ENCODE measurements at regions of chr17 and their contacts with region 1.

Region 1: GRCh38 chr17:19648475-19649406 is at the start of gene ALDH3A2:
- DNase-seq: peak; percentile 98
- H3K4me3 ChIP-seq: peak within 1 kb of the TSS; percentile 81 to 90 (median 88)
- H3K27ac ChIP-seq: peak within 1 kb of the TSS; percentile 86 to 99 (median 97)
- H3K4me1 ChIP-seq: peaks cover 0 to 63% (median 56%) of the 10 kb centered on the region in 4 donors
- H3K27me3 ChIP-seq: no peaks in the 10 kb centered on the region
- CTCF ChIP-seq: peak in 1 of 4 experiments; percentile 17
- EP300 ChIP-seq: peak in 1 of 4 donors; percentile 8
- POLR2A ChIP-seq: peak; percentile 92 to 94
- total RNA-seq, gene ALDH3A2: 56.8 to 104 (median 78.2) TPM

Region 2: DNA sequence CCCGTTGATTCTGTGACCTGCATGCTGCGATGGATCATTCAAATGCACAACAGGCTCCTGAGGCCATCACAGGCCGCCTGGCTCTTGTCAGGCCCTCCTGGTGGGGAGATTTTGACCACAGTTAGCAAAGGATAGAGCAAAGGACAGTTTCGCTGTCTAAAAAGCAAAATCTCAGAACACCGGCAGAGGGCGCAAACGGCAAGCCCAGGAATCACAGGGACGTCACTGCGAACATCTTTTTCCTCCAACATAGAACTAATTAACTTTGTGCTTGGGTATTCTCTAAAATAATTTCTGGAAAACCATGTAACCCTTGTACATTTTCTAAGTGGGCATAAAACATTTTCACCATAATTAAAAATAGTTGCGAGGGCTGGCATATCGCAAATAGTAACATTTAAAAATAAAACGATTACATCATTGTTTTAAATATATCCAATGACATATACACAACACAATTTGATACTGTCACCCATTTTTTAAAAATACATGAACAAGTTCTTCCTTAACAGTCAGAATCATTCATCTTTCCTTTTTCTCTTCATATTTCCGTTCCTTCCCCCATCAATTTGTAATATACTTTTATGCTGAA is 134.7 kb before region 1 on chr17:
- intact Hi-C with region 1: loop called (anchors 2 kb)
- DNase-seq: peak; percentile 84
- H3K4me3 ChIP-seq: no peak overlapping the region
- H3K27ac ChIP-seq: peak overlapping the region in 3 of 4 donors; percentile 23 to 68 (median 35)
- H3K4me1 ChIP-seq: peaks cover 0 to 23% (median 8%) of the 10 kb centered on the region in 4 donors
- H3K27me3 ChIP-seq: no peaks in the 10 kb centered on the region
- CTCF ChIP-seq: peak; percentile 85 to 96 (median 95)
- EP300 ChIP-seq: no peak
- POLR2A ChIP-seq: no peak

Region 3: GRCh38 chr17:19579867-19580565 is 68.7 kb before region 1 on chr17:
- intact Hi-C with region 1: loop called (anchors 5 kb)
- DNase-seq: no peak
- H3K4me3 ChIP-seq: peak overlapping the region; percentile 11 to 60 (median 50)
- H3K27ac ChIP-seq: peak overlapping the region in 3 of 4 donors; percentile 32 to 61 (median 59)
- H3K4me1 ChIP-seq: peaks cover 0 to 17% (median 9%) of the 10 kb centered on the region in 4 donors
- H3K27me3 ChIP-seq: no peaks in the 10 kb centered on the region
- CTCF ChIP-seq: no peak
- EP300 ChIP-seq: no peak
- POLR2A ChIP-seq: no peak

Region 4: DNA sequence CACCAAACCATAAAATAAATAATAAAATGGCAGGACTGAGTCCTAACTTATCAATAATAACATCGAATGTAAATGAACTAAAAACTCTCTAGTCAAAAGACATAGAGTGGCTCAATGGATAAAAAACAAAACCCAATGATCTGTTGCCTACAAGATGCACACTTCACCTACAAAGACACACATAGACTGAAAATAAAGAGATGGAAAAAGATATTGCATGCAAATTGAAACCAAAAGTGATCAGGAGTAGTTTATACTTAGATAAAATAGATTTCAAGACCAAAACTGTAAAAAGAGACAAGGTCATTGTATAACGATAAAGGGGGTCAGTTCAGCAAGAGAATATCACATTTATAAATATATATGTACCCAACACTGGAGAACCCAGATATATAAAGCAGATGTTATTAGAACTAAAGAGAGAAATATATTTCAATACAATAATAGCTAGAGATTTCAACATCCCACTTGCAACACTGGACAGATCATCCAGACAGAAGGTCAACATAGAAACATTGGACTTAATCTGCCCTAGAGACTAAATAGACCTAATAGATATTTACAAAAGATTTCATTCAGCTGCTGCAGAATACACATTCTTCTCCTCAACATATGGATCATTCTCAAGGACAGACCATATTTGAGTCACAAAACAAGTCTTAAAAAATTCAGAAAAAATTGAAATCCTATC is 37.8 kb after region 1 on chr17:
- intact Hi-C with region 1: no loop called
- DNase-seq: no peak
- H3K4me3 ChIP-seq: no peak overlapping the region
- H3K27ac ChIP-seq: no peak overlapping the region
- H3K4me1 ChIP-seq: no peaks in the 10 kb centered on the region
- H3K27me3 ChIP-seq: no peaks in the 10 kb centered on the region
- CTCF ChIP-seq: no peak
- EP300 ChIP-seq: no peak
- POLR2A ChIP-seq: no peak

Region 5: DNA sequence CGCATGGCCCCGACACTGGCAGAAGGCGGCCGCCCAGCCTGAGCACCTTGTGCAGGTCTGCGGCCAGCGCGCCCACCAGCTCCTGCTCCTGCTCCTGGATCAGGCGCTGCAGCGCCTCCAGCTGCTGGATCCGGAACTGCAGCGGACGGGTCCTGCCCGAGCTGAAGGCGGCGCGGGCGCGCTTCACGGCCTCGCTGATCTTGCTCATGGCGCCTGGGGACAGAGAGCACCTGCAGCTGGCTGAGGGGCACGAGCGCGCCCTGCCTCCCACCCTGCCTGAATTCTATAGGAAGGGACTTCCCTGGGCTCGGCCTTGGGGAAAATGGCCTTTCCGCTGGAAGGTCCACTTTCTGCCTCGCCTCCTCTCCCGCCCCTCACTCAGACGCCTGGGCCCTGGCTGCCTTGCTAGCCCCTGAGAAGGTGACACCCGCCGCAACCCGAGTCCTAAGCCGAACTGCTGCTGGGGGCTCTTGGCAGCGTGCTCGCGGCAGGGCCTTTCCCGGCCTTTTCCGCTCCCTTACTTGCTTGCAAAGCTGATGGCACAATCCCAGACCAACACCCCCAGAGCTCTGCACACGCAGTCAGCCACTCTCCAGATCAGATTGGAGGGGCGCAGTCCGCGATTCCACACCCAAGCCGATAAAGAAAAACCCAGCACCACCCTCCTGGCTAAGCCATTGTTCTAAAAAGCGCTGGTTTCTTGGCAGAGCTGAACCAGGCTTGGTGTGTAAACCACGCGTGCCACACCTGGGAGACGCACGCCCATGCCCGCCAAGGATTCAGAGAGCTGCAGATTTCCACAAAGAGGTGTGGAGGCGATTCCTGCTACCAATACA is 96.4 kb after region 1 on chr17:
- intact Hi-C with region 1: loop called (anchors 2 kb)
- DNase-seq: peak; percentile 96
- H3K4me3 ChIP-seq: peak overlapping the region; percentile 46 to 66 (median 60)
- H3K27ac ChIP-seq: peak overlapping the region; percentile 14 to 72 (median 54)
- H3K4me1 ChIP-seq: peaks cover 0 to 18% (median 11%) of the 10 kb centered on the region in 4 donors
- H3K27me3 ChIP-seq: no peaks in the 10 kb centered on the region
- CTCF ChIP-seq: peak; percentile 84 to 99 (median 92)
- EP300 ChIP-seq: no peak
- POLR2A ChIP-seq: no peak